ENCODE measurements at regions of chr12 and their contacts with region 1.

Region 1: DNA sequence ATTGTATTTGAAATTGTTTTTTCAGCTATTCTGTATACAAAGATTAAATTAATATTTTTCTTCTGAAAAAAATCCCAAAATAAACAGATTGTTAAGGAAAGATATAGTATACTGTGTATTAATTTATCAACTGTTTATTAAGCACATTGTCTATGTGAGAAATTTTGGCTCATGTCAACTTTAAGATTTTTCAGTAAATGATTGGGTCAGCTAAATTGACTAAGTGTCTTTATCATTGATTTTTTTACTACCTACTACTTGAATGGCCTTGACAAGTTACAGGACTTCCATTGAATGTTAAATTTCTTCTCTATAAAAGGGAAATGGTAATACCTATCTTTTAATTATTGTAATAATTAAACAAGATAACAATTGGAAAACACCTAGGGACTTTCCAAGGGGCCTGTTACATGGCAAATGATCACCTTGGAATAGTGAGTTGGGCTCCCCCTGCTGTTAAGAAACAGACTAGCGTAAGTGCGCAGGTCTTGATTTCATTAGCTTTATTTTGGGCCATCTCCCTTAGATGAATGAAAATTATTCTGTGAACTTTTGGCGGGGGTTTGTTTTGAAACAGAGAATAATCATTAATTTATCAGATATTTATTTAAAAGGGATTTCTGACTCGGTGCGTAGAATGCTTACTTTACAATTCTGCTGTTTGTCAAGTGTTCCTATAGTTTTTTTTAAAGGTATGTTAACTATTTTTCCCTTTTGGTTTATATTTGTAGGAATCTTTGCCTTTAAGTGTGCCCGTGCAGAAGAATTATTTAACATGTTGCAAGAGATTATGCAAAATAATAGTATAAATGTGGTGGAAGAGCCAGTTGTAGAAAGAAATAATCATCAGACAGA is 14.5 kb upstream of the CCT2 start:
- DNase-seq: peak; percentile 60
- ATAC-seq: peak; percentile 80
- H3K4me3 Mint-ChIP-seq: no peak overlapping the region
- H3K27ac Mint-ChIP-seq: no peak overlapping the region
- H3K4me1 Mint-ChIP-seq: peaks cover 3% of the 10 kb centered on the region; the same call in 1 of the 2 replicates
- H3K27me3 Mint-ChIP-seq: no peaks in the 10 kb centered on the region
- CTCF ChIP-seq: peak; percentile 70

Region 2: DNA sequence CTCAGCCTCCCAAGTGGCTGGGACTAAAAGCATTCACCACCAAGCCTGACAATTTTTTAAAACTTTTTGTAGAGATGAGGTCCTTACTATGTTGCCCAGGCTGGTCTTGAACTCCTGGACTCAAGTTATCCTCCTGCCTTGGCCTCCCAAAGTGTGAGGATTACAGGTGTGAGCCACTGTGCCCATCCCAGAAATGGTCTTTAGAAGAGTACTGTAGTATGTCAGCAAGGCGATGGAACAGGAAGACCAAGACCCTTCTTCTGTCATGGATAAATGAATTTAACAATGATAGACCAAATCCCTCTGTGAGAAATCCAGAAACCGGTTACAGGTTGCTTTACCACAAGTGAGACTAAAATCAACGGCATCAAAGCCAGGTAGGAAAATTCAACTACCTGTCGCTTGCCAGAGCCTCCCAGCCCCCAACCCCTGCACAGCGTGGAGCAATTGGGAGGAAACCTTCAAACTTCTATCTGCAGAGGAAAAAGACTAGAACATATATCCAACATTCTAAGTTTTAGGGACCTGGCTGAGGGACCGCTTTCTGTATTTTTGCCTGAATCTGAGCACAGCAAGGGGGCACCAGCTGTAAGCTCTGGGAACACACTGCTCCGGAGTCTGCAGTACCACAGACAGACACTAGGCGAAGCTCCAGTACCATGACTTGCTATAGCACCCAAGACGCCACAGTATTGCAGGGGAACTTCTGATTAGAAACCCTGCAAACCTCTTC is 280.1 kb before region 1 on chr12:
- CTCF ChIA-PET with region 1: interaction called, 30 read pairs
- POLR2A ChIA-PET with region 1: no interaction called
- DNase-seq: peak; percentile 93
- ATAC-seq: peak; percentile 100
- H3K4me3 Mint-ChIP-seq: no peak overlapping the region
- H3K27ac Mint-ChIP-seq: no peak overlapping the region
- H3K4me1 Mint-ChIP-seq: peaks cover 3% of the 10 kb centered on the region; the same call in 1 of the 2 replicates
- H3K27me3 Mint-ChIP-seq: no peaks in the 10 kb centered on the region
- CTCF ChIP-seq: peak; percentile 98

Region 3: GRCh38 chr12:69359531-69360347 is 211.0 kb before region 1 on chr12 and contains the start of gene YEATS4:
- CTCF ChIA-PET with region 1: interaction called, 12 read pairs
- POLR2A ChIA-PET with region 1: no interaction called
- DNase-seq: peak; percentile 79
- ATAC-seq: peak; percentile 82
- H3K4me3 Mint-ChIP-seq: peak within 1 kb of the TSS; percentile 91
- H3K27ac Mint-ChIP-seq: peak within 1 kb of the TSS; percentile 98
- H3K4me1 Mint-ChIP-seq: peaks cover 21% of the 10 kb centered on the region
- H3K27me3 Mint-ChIP-seq: no peaks in the 10 kb centered on the region
- CTCF ChIP-seq: no peak
- total RNA-seq, gene YEATS4: 33.3 to 37.1 TPM (median 33.5 TPM) in 3 replicates

Region 4: DNA sequence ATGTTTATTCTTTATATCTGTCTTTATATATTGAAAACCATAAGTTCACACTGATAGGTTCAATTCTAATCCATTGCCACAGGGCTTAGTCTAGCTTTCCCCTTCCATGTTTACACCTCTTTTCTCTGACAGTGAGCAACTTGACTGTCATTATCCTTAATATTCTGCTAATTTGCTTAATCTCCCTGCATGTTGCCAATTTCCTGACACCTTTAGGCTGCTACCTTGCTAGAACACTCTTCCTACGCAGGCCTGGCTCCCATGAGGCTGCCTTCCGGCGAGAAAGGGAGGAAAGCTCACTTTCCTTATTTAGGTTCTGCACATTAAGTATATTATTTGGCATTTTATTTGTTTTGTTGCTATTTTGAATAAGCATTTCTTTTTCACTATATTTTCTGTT is 113.3 kb before region 1 on chr12:
- CTCF ChIA-PET with region 1: no interaction called
- POLR2A ChIA-PET with region 1: no interaction called
- DNase-seq: no peak
- ATAC-seq: peak; percentile 64
- H3K4me3 Mint-ChIP-seq: no peak overlapping the region
- H3K27ac Mint-ChIP-seq: no peak overlapping the region
- H3K4me1 Mint-ChIP-seq: peaks cover 6% of the 10 kb centered on the region
- H3K27me3 Mint-ChIP-seq: no peaks in the 10 kb centered on the region
- CTCF ChIP-seq: no peak

Region 5: DNA sequence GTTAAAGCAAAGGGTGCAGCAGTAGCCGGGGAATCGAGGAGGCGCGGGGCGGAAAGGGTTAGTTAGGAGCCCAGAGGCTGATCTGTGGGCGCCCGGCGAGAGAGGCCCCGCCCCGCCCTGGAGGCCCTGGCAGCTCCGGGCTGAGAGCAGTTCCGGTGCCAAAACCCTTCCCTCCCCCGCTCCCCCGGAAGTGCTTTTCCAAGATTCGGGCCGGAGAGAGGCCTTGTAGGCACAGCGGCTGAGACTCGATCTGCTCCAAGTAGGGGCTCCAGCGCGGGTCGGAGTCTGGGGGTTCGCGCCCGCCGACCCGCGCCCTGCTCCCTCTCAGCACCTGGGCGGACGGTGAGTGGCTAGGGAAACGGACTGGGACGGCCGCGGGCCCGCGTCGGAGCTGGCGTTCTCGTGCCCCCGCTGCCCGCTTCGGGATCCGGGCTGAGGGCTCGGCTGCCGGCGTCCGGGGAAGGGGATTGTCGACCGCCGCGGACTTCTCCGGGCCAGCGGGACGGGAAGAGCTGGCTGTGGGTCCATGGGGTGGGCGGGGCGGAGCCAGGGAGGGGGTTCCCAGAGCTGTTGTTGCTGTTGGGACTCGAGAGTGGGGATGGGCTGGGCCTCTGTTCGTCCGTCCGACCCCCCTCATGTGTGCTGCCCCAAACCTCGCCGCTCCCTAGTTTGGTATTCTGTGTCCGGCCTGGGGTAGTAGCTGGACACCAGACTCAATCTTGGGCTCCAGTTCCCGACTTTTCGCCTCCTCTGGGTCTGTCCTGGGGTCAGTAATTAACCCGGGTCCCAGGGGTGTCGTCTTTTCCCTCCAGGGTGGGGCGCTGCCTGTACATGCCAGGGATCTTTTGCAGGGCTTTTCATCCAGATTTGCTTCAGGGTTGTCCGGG is 100.3 kb before region 1 on chr12 and contains the start of gene FRS2:
- CTCF ChIA-PET with region 1: interaction called, 10 read pairs
- POLR2A ChIA-PET with region 1: no interaction called
- DNase-seq: peak; percentile 93
- ATAC-seq: peak; percentile 88
- H3K4me3 Mint-ChIP-seq: peak within 1 kb of the TSS; percentile 91
- H3K27ac Mint-ChIP-seq: peak within 1 kb of the TSS; percentile 96
- H3K4me1 Mint-ChIP-seq: peaks cover 74% of the 10 kb centered on the region
- H3K27me3 Mint-ChIP-seq: no peaks in the 10 kb centered on the region
- CTCF ChIP-seq: no peak
- total RNA-seq, gene FRS2: 23.7 to 26.7 TPM (median 26.1 TPM) in 3 replicates

Region 6: DNA sequence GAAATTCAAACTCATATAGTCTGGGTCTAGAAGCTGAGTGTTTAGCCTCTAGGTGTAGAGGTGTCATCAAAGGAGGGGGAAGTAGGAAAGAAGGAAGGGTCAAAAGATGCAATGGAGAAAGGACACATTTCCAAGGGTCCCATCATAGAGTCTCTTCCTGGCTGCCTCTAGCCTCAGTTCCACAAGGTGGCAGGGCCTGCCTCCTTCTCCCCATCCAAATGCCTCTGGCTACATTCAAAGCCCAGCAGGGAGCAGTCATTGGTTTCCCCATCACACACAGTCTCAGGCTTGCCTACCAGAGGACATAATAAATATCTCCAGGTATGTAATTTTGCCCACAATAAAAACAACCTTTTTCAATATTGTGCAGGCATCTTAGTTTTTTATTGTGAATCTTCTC is 12.4 kb after region 1 on chr12:
- CTCF ChIA-PET with region 1: interaction called, 34 read pairs
- POLR2A ChIA-PET with region 1: interaction called, 3 read pairs
- DNase-seq: peak; percentile 44
- ATAC-seq: peak; percentile 56
- H3K4me3 Mint-ChIP-seq: no peak overlapping the region
- H3K27ac Mint-ChIP-seq: no peak overlapping the region
- H3K4me1 Mint-ChIP-seq: peaks cover 20% of the 10 kb centered on the region
- H3K27me3 Mint-ChIP-seq: no peaks in the 10 kb centered on the region; the same call in 1 of the 2 replicates
- CTCF ChIP-seq: no peak

Region 7: DNA sequence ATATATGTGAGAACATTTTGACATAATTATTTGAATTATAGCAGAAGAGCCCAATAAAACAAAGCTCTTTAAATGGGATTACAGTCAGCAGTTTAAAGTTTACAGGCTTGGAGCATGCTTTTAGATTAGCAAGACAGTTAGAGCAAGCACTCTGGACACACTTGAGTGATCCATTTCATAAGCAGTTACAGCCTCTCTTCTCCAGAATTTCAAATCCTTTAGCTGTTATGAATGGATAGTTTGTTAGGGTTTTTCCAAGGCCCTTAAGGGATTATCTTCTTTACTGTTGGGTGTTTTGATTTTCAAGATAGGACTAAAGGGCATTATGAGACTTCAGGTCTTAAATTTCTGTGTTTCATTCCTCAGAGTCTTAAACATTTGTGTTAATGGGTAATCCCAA is 92.0 kb after region 1 on chr12:
- CTCF ChIA-PET with region 1: no interaction called
- POLR2A ChIA-PET with region 1: no interaction called
- DNase-seq: no peak
- ATAC-seq: no peak
- H3K4me3 Mint-ChIP-seq: no peak overlapping the region
- H3K27ac Mint-ChIP-seq: no peak overlapping the region
- H3K4me1 Mint-ChIP-seq: no peaks in the 10 kb centered on the region
- H3K27me3 Mint-ChIP-seq: no peaks in the 10 kb centered on the region
- CTCF ChIP-seq: no peak